Endothelial cell of umbilical vein (primary cell): ENCODE measurements at regions of chr9 and their contacts with region 1.

Region 1: DNA sequence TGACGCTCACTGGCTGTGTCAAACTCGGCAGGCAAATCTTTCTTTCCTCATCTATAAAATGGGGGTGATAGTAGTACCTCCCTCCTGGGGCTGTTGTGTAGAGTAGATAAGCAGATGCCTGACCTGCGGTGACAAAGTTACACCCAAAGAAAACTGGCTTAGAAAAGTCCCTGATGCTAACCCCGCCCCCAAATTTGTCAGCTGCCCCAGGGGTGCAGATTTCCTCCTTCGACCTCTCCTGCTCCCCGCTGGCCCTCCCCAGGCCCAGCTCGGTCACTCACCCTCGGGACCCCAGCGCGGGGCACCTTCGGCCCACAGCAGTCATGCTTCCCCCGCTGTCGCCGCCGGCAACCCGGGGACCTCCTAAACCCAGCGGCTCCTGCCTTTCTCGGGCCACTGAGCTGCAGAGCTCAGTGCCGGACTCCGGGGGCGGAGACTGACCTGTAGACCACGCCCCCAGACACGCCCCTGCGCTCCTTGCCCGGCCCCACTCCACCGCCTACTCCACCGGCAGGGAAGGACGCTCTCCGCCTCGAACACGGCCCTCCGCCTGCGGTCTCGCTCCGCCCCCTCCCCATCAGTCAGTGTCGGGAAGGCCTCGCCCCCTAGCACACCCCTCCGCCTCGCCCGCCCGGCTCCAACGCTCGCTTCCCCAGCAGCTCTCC is 7.4 kb downstream of the SH2D3C start:
- DNase-seq: peak; percentile 99
- H3K4me3 ChIP-seq: peak overlapping the region; percentile 35 to 79 (median 75)
- H3K27ac ChIP-seq: peak overlapping the region; percentile 96
- H3K4me1 ChIP-seq: peaks cover 39% of the 10 kb centered on the region
- H3K27me3 ChIP-seq: no peaks in the 10 kb centered on the region
- CTCF ChIP-seq: no peak
- POLR2A ChIP-seq: peak; percentile 93

Region 2: DNA sequence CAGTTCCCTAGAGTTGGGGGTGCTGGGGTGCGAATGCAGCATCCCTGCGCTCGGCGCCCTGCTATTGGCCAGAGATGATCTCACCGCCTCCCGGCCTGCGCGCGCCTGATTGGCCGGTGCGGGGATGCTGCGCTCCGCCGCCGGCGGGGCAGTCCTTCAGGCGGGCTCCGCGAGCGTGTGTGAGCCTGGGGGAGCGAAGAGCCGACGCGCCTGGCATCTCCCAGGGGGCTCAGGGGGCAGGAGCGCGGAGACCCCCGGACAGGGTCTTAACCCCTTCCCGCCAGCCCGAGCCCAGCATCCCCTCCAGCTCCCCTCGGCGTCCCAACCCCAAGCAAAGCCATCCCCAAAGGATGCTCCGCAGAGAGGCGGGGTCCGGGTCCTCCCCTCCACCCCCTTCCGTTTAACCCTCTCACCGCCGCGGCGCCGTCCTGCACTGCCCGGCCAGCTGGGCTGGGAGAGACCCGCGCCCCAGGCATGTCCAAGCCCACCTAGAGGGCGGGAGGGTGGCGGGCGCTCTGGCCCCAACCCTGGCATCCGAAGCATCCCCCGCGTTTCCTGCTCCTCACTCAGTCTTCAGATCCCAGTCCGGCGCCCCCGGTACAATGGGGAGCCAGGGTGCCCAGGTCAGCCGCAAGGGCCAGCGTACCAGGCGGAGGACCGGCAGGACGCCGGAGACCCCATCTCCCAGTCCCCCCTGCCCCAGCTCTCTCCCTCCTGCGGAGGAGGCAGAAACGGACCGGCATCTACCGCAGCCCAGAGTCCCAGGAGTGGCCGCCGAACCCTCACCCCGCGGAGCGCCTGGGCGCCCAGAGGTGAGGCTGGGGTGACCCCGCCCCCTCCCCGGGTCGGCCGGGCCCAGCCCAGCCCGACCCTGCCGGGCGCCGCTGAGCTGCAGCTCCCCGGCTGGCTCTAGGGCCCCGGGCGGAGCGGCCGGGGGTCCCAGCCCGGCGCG is 16.7 kb before region 1 on chr9:
- CTCF ChIA-PET with region 1: interaction called, 4 read pairs
- POLR2A ChIA-PET with region 1: interaction called, 6 read pairs
- dilution Hi-C with region 1: no loop called
- intact Hi-C with region 1: loop called (anchors 2 kb)
- DNase-seq: no peak
- H3K4me3 ChIP-seq: no peak overlapping the region
- H3K27ac ChIP-seq: no peak overlapping the region
- H3K4me1 ChIP-seq: peaks cover 12% of the 10 kb centered on the region
- H3K27me3 ChIP-seq: no peaks in the 10 kb centered on the region
- CTCF ChIP-seq: no peak
- POLR2A ChIP-seq: no peak

Region 3: GRCh38 chr9:127802576-127803443 is 31.8 kb after region 1 on chr9 and contains the start of gene FPGS:
- CTCF ChIA-PET with region 1: no interaction called
- POLR2A ChIA-PET with region 1: no interaction called
- dilution Hi-C with region 1: no loop called
- intact Hi-C with region 1: loop called (anchors 2 kb)
- DNase-seq: peak; percentile 86
- H3K4me3 ChIP-seq: peak within 1 kb of the TSS; percentile 71 to 80 (median 79)
- H3K27ac ChIP-seq: peak within 1 kb of the TSS; percentile 83
- H3K4me1 ChIP-seq: peaks cover 19% of the 10 kb centered on the region
- H3K27me3 ChIP-seq: no peaks in the 10 kb centered on the region
- CTCF ChIP-seq: peak in 1 of 2 donors; percentile 1
- POLR2A ChIP-seq: peak; percentile 69
- total RNA-seq, gene FPGS: 90.2 and 90.7 TPM in 2 replicates

Region 4: DNA sequence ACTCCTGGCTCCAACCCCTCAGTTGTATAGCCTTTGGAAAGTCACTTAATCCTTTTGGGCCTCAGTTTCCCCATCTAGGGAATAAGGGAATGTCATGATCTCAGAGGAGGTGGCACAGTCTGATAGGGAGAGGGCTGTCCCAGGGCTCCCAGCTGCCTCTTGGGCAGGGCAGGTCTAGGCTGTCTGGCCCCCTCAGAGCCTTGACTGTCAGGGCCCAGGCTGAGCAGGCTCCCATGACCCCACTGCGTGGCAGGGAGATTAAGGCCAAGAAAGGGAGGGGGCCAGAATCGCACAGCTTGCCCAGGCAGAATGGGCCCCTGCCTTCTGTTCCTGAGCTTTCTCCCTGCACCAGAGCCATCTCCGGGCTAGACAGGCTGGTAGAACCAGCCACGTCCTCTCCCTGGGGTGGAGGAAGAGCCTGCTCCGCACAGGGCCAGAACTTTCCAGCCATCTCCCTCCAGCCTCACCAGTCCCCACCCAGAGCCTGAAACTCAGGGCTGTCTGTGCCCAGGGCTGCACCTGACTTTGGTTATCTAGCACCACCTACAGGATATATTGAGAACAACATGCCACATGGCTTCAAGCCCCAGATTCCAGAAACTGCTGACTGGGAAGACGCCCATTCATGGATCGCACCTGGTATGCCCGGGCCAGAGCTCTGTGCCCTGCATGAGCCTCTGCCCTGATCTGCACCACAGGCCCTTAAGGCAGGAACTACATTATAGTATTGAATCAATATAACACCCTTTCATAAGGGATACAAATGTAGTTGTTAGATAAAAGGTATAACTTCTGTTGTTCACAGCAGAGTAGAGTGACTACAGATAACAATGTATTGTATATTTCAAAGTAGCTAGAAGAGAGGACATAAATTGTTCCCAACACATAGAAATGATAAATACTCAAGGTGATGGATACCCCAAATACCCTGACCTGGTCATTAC is 264.1 kb after region 1 on chr9:
- CTCF ChIA-PET with region 1: no interaction called
- POLR2A ChIA-PET with region 1: no interaction called
- dilution Hi-C with region 1: no loop called
- intact Hi-C with region 1: no loop called
- DNase-seq: peak; percentile 84
- H3K4me3 ChIP-seq: no peak overlapping the region
- H3K27ac ChIP-seq: no peak overlapping the region
- H3K4me1 ChIP-seq: no peaks in the 10 kb centered on the region
- H3K27me3 ChIP-seq: no peaks in the 10 kb centered on the region
- CTCF ChIP-seq: peak; percentile 77 to 78
- POLR2A ChIP-seq: no peak